Gastrocnemius medialis (tissue), 4 donors: ENCODE measurements at regions of chr10 and their contacts with region 1.

Region 1: DNA sequence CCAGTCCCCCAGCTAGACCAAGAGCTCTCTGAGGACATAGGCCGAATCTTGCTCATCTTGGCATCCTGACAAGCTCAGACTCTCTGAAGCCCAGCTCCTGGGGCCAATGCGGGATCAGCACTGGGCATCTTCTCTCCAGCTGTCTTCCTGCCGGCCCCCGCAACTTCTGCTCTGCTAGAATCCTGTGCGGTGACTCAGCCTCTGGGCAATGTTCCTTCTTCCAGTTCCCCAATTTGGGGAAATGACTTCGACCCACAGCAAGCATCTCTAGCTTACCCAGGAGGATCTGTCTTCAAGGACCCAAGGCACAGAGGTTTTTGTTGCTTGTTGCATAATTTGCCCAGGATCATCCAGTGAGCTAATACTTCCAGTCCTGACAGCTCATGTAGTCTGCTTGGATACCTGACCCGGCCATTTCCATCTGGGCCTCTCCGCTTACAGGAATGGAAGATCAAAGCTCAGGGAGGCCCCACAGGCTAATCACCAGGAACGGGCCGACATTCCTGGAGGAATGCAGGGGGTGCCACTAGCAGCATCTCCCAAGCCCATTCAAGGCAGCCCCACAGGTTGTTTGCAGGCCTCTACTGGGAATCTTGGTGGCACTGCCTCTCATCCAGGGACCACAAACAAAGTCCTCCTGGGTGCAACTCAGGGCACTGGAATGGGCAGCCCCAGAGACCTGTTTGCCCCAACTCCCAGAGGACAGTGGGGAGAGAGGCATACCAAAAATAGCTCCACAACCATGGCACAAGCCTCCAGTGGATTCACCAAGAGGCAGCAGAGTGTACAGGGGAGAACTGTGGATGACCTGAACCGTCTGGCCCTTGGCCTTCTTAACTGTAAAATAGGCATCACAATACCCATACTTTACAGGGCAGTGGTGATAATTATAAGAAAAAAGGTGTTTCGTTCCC is 151.9 kb downstream of the NEURL1 start:
- DNase-seq: peak; percentile 61 to 71
- ATAC-seq: peak; percentile 40 to 67
- H3K4me3 ChIP-seq: no peak overlapping the region
- H3K27ac ChIP-seq: peak overlapping the region; percentile 62 to 78 (median 72)
- H3K4me1 ChIP-seq: peaks cover 71 to 76% of the 10 kb centered on the region in 2 donors
- H3K27me3 ChIP-seq: no peaks in the 10 kb centered on the region
- CTCF ChIP-seq: no peak
- POLR2A ChIP-seq: no peak

Region 2: GRCh38 chr10:103618575-103619423 is 26.6 kb before region 1 on chr10:
- in situ Hi-C with region 1: no loop called
- intact Hi-C with region 1: loop called (anchors 2 kb)
- DNase-seq: peak; percentile 39 to 67
- ATAC-seq: peak; percentile 15 to 29
- H3K4me3 ChIP-seq: no peak overlapping the region
- H3K27ac ChIP-seq: peak overlapping the region in 2 of 4 donors; percentile 29 to 45
- H3K4me1 ChIP-seq: peaks cover 69 to 75% of the 10 kb centered on the region in 2 donors
- H3K27me3 ChIP-seq: no peaks in the 10 kb centered on the region
- CTCF ChIP-seq: no peak
- POLR2A ChIP-seq: no peak

Region 3: DNA sequence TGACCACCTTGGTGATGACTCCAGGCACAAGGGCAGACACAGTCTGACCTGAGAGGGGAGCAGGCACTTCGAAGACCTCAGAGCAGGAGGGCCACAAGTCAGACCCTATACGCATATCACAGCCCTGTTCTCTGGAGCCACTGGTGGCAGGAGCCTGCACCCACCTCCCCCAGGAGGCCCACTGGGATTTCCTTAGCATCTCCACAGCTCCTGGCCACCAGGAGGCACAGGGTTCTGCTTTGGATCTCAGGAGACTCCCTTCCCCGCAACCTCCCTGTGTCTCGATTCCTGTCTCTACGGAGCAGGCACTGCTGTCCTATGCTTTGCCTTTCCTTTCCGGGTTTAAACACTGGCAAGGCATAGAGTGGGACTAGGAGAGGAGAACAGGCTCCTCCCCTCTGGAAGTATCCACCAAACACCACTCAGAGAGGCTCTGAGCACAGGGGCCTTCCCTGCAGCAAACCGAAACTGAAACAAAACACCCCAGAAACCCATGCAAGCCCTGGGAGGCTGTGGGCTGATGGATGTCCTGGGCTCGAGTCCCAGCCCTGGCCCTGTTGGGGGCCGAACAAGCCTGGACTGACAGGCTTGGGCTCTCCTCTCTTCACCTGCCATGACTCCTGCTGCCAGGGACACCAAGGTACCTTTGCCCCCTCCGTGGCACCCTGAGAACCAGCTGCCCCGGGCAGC is 14.4 kb after region 1 on chr10:
- in situ Hi-C with region 1: no loop called
- intact Hi-C with region 1: loop called (anchors 2 kb)
- DNase-seq: peak; percentile 55 to 75
- ATAC-seq: peak; percentile 29 to 64
- H3K4me3 ChIP-seq: peak overlapping the region; percentile 56 to 69 (median 60)
- H3K27ac ChIP-seq: peak overlapping the region; percentile 89 to 94 (median 91)
- H3K4me1 ChIP-seq: peaks cover 38 to 40% of the 10 kb centered on the region in 2 donors
- H3K27me3 ChIP-seq: no peaks in the 10 kb centered on the region
- CTCF ChIP-seq: no peak
- POLR2A ChIP-seq: peak; percentile 26 to 28

Region 4: GRCh38 chr10:103759100-103759781 is 113.8 kb after region 1 on chr10:
- in situ Hi-C with region 1: no loop called
- intact Hi-C with region 1: loop called (anchors 5 kb)
- DNase-seq: peak; percentile 76 to 89
- ATAC-seq: peak; percentile 84 to 88
- H3K4me3 ChIP-seq: no peak overlapping the region
- H3K27ac ChIP-seq: peak overlapping the region; percentile 88 to 98 (median 94)
- H3K4me1 ChIP-seq: peaks cover 79 to 80% of the 10 kb centered on the region in 2 donors
- H3K27me3 ChIP-seq: no peaks in the 10 kb centered on the region
- CTCF ChIP-seq: peak in 1 of 5 experiments; percentile 23
- POLR2A ChIP-seq: peak; percentile 41 to 71